GM12878 (cell line): ENCODE measurements at regions of chr1 and their contacts with region 1.

Region 1: DNA sequence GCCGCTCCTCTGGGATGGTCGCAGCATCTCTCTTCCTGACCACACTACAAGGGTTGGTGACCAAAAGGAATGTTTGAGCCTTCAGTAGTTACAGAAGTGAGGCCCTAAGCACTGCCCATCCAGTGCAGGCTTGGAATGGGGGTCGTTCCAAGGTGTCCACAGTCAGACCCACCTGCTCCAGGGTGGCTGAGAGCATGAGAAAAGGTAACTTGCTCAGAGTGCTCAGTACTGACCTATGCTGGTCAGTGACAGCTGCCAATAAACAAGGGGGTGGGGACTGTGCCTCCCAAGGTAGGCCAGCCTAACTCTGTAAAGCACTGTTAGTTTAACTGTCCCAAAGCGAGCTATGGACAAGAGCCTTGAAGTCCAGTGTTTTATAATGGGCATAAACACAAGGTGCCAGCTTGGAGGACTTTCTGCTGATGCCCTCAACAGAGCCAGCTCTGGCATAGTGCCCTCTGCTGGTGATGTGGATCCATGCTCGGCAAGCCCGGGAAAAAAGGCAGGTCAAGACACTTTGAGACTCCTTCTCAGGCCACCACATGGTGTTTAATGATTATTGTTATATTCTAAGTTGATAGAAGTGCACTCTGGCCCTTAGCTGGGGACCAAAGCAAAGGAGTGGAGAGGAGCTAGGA is 78.1 kb upstream of the DNAH14 start:
- DNase-seq: peak; percentile 41
- ATAC-seq: peak; percentile 95
- H3K4me3 ChIP-seq: no peak overlapping the region
- H3K27ac ChIP-seq: no peak overlapping the region
- H3K4me1 ChIP-seq: no peaks in the 10 kb centered on the region
- H3K27me3 ChIP-seq: no peaks in the 10 kb centered on the region; a peak in 1 of 4 replicates
- CTCF ChIP-seq: peak; percentile 81 to 89 (median 87)
- EP300 ChIP-seq: no peak
- POLR2A ChIP-seq: no peak
- RAD21 ChIP-seq: peak; percentile 80

Region 2: DNA sequence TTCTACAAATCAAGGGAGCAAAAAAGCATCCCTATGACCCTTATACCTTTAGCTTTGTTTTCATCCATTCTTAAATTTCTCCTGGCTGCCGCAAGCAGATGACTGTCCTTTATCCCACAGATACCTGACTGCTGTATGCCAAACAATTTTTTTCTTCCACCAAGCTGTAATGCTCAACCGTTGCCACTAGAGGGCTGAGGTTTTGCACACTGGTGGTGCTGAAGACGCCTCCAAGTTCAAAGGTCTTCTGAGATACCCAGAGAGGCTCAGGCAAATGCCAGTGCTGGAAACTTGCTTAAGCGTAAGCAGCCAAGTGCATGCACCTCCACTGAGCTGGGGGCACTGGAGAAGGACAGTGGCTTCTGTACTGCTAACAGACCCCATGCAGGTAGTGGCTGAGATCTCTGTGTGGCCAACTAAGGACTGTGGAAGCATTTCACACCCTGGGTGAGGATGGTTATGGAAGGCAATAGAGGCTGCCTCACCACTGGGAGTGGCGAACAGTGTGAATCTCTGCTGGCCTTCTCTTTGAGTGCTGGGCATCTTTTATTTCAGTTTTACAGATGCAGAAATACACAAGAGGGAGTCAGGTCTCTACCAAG is 206.7 kb before region 1 on chr1:
- CTCF ChIA-PET with region 1: interaction called, 207 read pairs
- POLR2A ChIA-PET with region 1: no interaction called
- RAD21 ChIA-PET with region 1: interaction called, 90 read pairs
- SMC1A ChIA-PET with region 1: interaction called, 147 read pairs
- in situ Hi-C with region 1: loop called (anchors 5 kb)
- intact Hi-C with region 1: loop called (anchors 1 kb)
- DNase-seq: peak; percentile 24
- ATAC-seq: peak; percentile 85
- H3K4me3 ChIP-seq: no peak overlapping the region
- H3K27ac ChIP-seq: no peak overlapping the region
- H3K4me1 ChIP-seq: no peaks in the 10 kb centered on the region
- H3K27me3 ChIP-seq: no peaks in the 10 kb centered on the region; a peak in 1 of 4 replicates
- CTCF ChIP-seq: peak; percentile 84 to 91 (median 90)
- EP300 ChIP-seq: no peak
- POLR2A ChIP-seq: no peak
- RAD21 ChIP-seq: peak; percentile 84

Region 3: GRCh38 chr1:224700915-224701531 is 150.3 kb before region 1 on chr1:
- CTCF ChIA-PET with region 1: interaction called, 107 read pairs
- POLR2A ChIA-PET with region 1: no interaction called
- RAD21 ChIA-PET with region 1: interaction called, 61 read pairs
- SMC1A ChIA-PET with region 1: interaction called, 96 read pairs
- in situ Hi-C with region 1: loop called (anchors 5 kb)
- intact Hi-C with region 1: loop called (anchors 1 kb)
- DNase-seq: peak; percentile 9
- ATAC-seq: peak; percentile 89
- H3K4me3 ChIP-seq: no peak overlapping the region
- H3K27ac ChIP-seq: no peak overlapping the region
- H3K4me1 ChIP-seq: no peaks in the 10 kb centered on the region
- H3K27me3 ChIP-seq: no peaks in the 10 kb centered on the region
- CTCF ChIP-seq: peak; percentile 36 to 65 (median 54)
- EP300 ChIP-seq: no peak
- POLR2A ChIP-seq: no peak
- RAD21 ChIP-seq: peak; percentile 92

Region 4: DNA sequence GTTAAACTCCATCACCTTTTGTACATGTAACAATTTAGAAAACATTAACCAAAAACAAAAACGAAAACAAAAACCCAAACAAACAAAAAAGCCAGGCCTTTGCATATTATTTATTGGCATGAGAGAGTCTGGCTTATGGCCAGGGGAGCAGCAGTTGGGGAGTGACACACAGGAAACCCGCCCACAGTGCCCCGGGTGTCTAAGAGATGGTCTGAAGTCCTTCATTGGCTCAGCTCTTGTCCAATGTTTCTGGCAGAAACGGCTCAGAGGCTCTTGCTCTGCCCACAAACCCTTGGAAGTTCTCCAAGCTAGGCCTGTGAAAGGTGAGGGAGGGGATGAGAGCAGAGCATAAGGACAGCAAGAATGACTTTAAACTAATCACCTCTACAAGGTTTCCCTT is 103.8 kb before region 1 on chr1:
- CTCF ChIA-PET with region 1: interaction called, 208 read pairs
- POLR2A ChIA-PET with region 1: interaction called, 3 read pairs
- RAD21 ChIA-PET with region 1: interaction called, 10 read pairs
- SMC1A ChIA-PET with region 1: interaction called, 202 read pairs
- in situ Hi-C with region 1: no loop called
- intact Hi-C with region 1: no loop called
- DNase-seq: no peak
- ATAC-seq: peak; percentile 45
- H3K4me3 ChIP-seq: no peak overlapping the region
- H3K27ac ChIP-seq: no peak overlapping the region
- H3K4me1 ChIP-seq: peaks cover 53% of the 10 kb centered on the region
- H3K27me3 ChIP-seq: no peaks in the 10 kb centered on the region
- CTCF ChIP-seq: no peak
- EP300 ChIP-seq: no peak
- POLR2A ChIP-seq: no peak
- RAD21 ChIP-seq: no peak

Region 5: DNA sequence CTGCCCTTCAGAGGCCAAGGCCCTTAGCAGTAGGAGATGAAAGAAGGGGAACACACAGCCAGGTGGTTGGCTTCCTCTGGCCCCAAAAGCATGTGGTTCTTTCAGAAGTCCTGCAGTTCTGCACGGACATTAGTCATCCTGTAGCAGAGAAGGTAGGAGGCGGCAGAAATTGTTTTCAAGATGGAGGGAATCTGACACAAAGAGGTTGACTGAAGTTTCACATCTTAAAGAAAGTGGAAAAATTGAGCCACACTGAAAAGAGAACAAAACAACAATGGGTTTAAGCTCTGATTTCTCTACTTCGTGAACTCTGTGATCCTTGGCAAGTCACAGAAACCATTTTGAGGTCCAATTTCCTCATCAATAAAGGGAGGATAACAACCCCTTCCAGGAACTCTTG is 47.1 kb before region 1 on chr1:
- CTCF ChIA-PET with region 1: interaction called, 16 read pairs
- POLR2A ChIA-PET with region 1: no interaction called
- RAD21 ChIA-PET with region 1: interaction called, 7 read pairs
- SMC1A ChIA-PET with region 1: interaction called, 18 read pairs
- in situ Hi-C with region 1: no loop called
- intact Hi-C with region 1: no loop called
- DNase-seq: no peak
- ATAC-seq: no peak
- H3K4me3 ChIP-seq: no peak overlapping the region
- H3K27ac ChIP-seq: no peak overlapping the region
- H3K4me1 ChIP-seq: no peaks in the 10 kb centered on the region
- H3K27me3 ChIP-seq: no peaks in the 10 kb centered on the region
- CTCF ChIP-seq: no peak
- EP300 ChIP-seq: no peak
- POLR2A ChIP-seq: no peak
- RAD21 ChIP-seq: no peak

Region 6: DNA sequence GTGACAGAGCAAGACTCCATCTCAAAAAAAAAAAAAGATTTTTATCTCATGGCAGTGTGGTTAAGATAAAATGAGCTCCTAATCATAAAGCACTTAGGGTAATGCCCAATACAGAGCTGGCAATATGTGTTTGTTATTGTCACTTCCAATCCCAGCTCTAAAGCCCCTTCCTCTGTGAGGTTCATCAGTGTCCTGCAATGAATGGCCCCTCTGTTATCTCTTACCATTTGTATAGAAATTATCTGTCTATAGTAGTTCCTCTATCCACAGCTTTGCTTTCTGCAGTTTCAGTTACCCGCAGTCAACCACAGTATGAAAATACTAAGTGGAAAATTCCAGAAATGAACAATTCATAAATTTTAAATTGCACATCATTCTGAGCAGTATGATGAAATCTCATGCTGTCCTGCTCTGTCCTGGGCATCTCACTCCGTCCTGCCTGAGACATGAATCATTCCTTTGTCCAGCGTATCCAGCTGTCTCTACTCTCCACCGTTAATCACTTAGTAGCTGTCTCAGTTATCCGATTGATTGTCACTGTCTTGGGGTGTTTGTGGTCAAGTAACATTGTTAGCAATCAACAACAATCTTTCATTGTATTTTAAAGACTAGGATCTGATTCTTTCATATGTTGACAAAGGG is 28.0 kb after region 1 on chr1:
- CTCF ChIA-PET with region 1: interaction called, 13 read pairs
- POLR2A ChIA-PET with region 1: no interaction called
- RAD21 ChIA-PET with region 1: interaction called, 7 read pairs
- SMC1A ChIA-PET with region 1: interaction called, 16 read pairs
- in situ Hi-C with region 1: no loop called
- intact Hi-C with region 1: no loop called
- DNase-seq: no peak
- ATAC-seq: peak; percentile 16; the same call in 2 of the 3 replicates
- H3K4me3 ChIP-seq: no peak overlapping the region
- H3K27ac ChIP-seq: no peak overlapping the region
- H3K4me1 ChIP-seq: no peaks in the 10 kb centered on the region
- H3K27me3 ChIP-seq: no peaks in the 10 kb centered on the region
- CTCF ChIP-seq: no peak
- EP300 ChIP-seq: no peak
- POLR2A ChIP-seq: no peak
- RAD21 ChIP-seq: no peak